AG04450 (cell line): ENCODE measurements at regions of chr9 and their contacts with region 1.

Region 1: DNA sequence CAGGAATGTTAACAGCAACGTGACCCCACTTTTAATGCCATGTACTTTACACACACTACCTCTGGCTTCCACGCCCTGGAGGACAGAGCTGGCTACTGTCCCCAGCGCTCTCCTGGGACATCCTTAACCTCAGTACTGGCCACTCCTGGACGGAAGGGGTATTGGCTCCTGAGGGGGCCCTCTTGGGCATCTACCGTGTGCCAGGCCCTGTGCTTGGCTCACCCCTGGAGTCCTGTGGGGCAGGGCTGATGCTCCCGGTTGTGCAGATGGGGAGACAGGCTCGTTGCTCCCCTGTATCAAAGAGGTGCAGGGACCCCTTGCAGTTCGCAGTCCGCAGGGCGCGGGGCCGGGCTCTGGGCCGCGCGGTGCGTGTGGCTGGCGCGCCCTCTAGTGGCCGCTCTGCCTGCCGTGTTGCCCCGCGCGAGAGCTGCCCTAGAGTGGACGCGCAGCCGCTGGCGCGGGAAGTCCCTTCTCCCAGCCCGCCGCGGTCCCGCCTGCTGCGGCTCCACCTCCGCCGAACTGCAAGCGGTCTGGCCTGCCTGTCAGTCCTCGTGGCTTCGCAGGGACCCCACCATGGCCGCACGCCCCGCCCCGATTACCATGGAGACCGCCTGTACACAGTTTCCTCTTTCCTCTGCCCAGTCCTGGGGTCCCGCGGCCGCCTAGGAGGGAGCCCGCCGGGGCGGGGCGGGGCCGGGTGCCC is at the start of gene WDR38:
- DNase-seq: no peak
- H3K4me3 ChIP-seq: peak within 1 kb of the TSS; percentile 61
- H3K27ac ChIP-seq: no peak within 1 kb of the TSS
- H3K27me3 ChIP-seq: peaks cover 3% of the 10 kb centered on the region
- CTCF ChIP-seq: peak; percentile 82
- polyA plus RNA-seq, gene WDR38: not detected in 2 replicates

Region 2: GRCh38 chr9:124764774-124765438 is 88.1 kb before region 1 on chr9:
- CTCF ChIA-PET with region 1: interaction called, 674 read pairs
- POLR2A ChIA-PET with region 1: no interaction called
- DNase-seq: no peak
- H3K4me3 ChIP-seq: no peak overlapping the region
- H3K27ac ChIP-seq: no peak overlapping the region
- H3K27me3 ChIP-seq: peaks cover 86% of the 10 kb centered on the region
- CTCF ChIP-seq: peak; percentile 39

Region 3: GRCh38 chr9:124812401-124813016 is 40.5 kb before region 1 on chr9:
- CTCF ChIA-PET with region 1: interaction called, 16 read pairs
- POLR2A ChIA-PET with region 1: interaction called, 3 read pairs
- DNase-seq: peak; percentile 95
- H3K4me3 ChIP-seq: no peak overlapping the region
- H3K27ac ChIP-seq: peak overlapping the region; percentile 98
- H3K27me3 ChIP-seq: no peaks in the 10 kb centered on the region
- CTCF ChIP-seq: peak; percentile 18; the same call in 1 of the 2 replicates

Region 4: DNA sequence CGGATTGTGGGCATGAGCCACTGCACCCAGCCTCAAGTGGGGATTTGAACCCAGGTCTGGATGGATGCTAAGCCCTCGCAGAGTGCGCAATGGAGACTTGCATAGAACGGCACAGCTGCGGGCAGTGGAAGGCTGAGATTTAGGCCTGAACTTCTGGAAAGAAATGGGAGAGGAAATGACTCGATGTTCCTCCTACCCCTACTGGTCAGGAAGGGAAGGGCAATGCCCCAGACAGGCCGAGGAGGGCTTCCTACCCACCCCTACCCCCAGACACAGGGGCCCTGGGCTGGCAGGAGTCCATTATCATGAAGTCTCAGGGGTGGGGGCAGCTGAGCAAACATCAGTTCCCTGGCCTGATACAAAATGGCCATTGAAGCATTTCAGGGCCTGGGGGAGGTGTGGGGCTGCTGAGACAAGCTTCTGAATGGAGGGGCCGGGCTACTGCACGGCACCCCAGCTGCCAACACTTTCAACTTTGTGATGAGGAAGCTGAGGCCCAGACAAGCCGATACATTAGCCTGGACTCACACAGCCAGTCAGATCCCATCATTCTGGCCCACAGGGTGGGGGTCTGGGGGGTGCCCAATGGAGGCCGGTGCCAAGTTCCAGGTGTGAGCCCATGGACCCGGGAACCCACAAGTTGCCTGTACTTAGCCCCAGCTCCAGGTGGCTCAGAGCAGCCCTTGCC is 13.2 kb before region 1 on chr9:
- CTCF ChIA-PET with region 1: interaction called, 33 read pairs
- POLR2A ChIA-PET with region 1: interaction called, 4 read pairs
- DNase-seq: no peak
- H3K4me3 ChIP-seq: no peak overlapping the region
- H3K27ac ChIP-seq: no peak overlapping the region
- H3K27me3 ChIP-seq: no peaks in the 10 kb centered on the region
- CTCF ChIP-seq: peak; percentile 67